PC-9 (cell line): ENCODE measurements at regions of chr3 and their contacts with region 1.

Region 1: GRCh38 chr3:107377151-107377550 is at the start of gene CCDC54:
- DNase-seq: no peak
- H3K4me3 ChIP-seq: no peak within 1 kb of the TSS
- H3K27ac ChIP-seq: no peak within 1 kb of the TSS
- H3K4me1 ChIP-seq: peaks cover 12% of the 10 kb centered on the region
- H3K27me3 ChIP-seq: no peaks in the 10 kb centered on the region
- CTCF ChIP-seq: no peak
- total RNA-seq, gene CCDC54: not detected in 2 replicates

Region 2: GRCh38 chr3:107392549-107393165 is 15.5 kb after region 1 on chr3:
- CTCF ChIA-PET with region 1: no interaction called
- POLR2A ChIA-PET with region 1: no interaction called
- intact Hi-C with region 1: loop called (anchors 2 kb)
- DNase-seq: peak; percentile 55 to 86
- H3K4me3 ChIP-seq: peak overlapping the region; percentile 5; the same call in 1 of the 2 replicates
- H3K27ac ChIP-seq: peak overlapping the region; percentile 69
- H3K4me1 ChIP-seq: peaks cover 21% of the 10 kb centered on the region
- H3K27me3 ChIP-seq: no peaks in the 10 kb centered on the region
- CTCF ChIP-seq: no peak

Region 3: GRCh38 chr3:107414325-107414964 is 37.3 kb after region 1 on chr3:
- CTCF ChIA-PET with region 1: no interaction called
- POLR2A ChIA-PET with region 1: no interaction called
- intact Hi-C with region 1: no loop called
- DNase-seq: no peak
- H3K4me3 ChIP-seq: no peak overlapping the region
- H3K27ac ChIP-seq: no peak overlapping the region
- H3K4me1 ChIP-seq: no peaks in the 10 kb centered on the region
- H3K27me3 ChIP-seq: no peaks in the 10 kb centered on the region
- CTCF ChIP-seq: no peak

Region 4: GRCh38 chr3:107458871-107459270 is 81.7 kb after region 1 on chr3:
- CTCF ChIA-PET with region 1: no interaction called
- POLR2A ChIA-PET with region 1: no interaction called
- intact Hi-C with region 1: no loop called
- DNase-seq: peak in 1 of 2 experiments; percentile 10
- H3K4me3 ChIP-seq: no peak overlapping the region
- H3K27ac ChIP-seq: no peak overlapping the region
- H3K4me1 ChIP-seq: no peaks in the 10 kb centered on the region
- H3K27me3 ChIP-seq: no peaks in the 10 kb centered on the region
- CTCF ChIP-seq: no peak